Breast epithelium (tissue), 4 donors: ENCODE measurements at regions of chr15 and their contacts with region 1.

Region 1: GRCh38 chr15:68154923-68155559 is 50.1 kb downstream of the CALML4 start:
- DNase-seq: no peak
- H3K4me3 ChIP-seq: no peak overlapping the region
- H3K27ac ChIP-seq: no peak overlapping the region
- H3K4me1 ChIP-seq: no peaks in the 10 kb centered on the region
- H3K27me3 ChIP-seq: no peaks in the 10 kb centered on the region
- CTCF ChIP-seq: peak; percentile 44 to 81 (median 70)
- POLR2A ChIP-seq: no peak

Region 2: GRCh38 chr15:67331676-67332075 is 823.4 kb before region 1 on chr15:
- intact Hi-C with region 1: loop called (anchors 5 kb)
- DNase-seq: no peak
- H3K4me3 ChIP-seq: no peak overlapping the region
- H3K27ac ChIP-seq: no peak overlapping the region
- H3K4me1 ChIP-seq: no peaks in the 10 kb centered on the region
- H3K27me3 ChIP-seq: no peaks in the 10 kb centered on the region
- CTCF ChIP-seq: no peak
- POLR2A ChIP-seq: no peak

Region 3: DNA sequence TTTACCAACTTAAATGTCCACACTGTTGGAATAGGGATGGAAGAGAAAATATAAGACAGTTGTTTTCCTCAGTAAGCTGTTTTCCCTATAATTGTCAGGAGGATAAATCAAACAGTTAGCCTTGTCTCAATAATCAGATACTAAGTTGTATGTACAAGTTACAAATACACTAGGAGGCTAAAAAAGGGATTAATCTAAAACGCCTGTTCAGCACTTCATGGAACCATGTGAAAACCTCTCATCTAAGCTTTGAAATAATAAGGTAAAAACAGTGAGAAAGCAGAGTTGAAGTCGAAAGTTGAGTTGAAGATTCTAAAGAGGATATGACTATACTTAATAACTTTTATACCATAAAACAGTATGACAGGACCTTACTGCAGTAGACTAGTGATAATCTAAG is 11.9 kb before region 1 on chr15:
- intact Hi-C with region 1: no loop called
- DNase-seq: no peak
- H3K4me3 ChIP-seq: no peak overlapping the region
- H3K27ac ChIP-seq: no peak overlapping the region
- H3K4me1 ChIP-seq: no peaks in the 10 kb centered on the region
- H3K27me3 ChIP-seq: no peaks in the 10 kb centered on the region
- CTCF ChIP-seq: no peak
- POLR2A ChIP-seq: no peak